BJ (cell line): ENCODE measurements at regions of chr3 and their contacts with region 1.

Region 1: DNA sequence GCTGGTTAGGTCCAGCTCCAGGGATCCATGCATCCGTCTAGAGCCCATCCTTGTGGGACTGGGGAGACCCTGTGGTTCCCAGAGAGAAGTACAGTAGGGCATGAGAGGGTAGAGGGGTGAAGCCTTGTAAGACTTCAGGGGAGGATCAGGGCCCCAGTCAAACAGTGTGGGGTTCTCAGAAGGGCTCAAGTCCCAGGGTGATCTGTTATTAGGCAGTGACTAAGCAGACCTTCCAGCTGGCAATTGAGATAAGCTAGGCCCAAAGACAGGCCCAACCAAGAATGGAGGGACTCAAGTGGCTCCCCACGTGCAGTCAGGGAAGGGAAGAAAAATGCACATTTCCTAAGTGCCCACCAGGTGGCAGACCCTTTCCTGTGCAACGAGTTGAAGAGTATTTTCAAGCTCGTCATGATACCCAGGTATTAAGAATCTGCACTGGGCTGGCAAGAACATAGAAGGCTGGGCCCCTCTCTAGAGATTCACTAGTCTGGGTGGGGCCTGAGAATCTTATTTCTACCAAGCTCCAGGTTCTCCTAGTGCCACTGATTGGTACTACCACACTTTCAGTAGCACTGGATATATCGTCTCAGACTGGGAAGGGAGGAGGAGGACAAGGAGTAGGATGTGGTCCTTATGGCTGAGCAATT is 240.8 kb downstream of the NR1D2 start:
- DNase-seq: no peak
- H3K4me3 ChIP-seq: no peak overlapping the region
- H3K27me3 ChIP-seq: no peaks in the 10 kb centered on the region
- CTCF ChIP-seq: peak; percentile 74

Region 2: GRCh38 chr3:24196526-24196925 is 10.7 kb after region 1 on chr3:
- CTCF ChIA-PET with region 1: interaction called, 14 read pairs
- POLR2A ChIA-PET with region 1: no interaction called
- DNase-seq: peak; percentile 77
- H3K4me3 ChIP-seq: no peak overlapping the region
- H3K27me3 ChIP-seq: no peaks in the 10 kb centered on the region
- CTCF ChIP-seq: no peak

Region 3: DNA sequence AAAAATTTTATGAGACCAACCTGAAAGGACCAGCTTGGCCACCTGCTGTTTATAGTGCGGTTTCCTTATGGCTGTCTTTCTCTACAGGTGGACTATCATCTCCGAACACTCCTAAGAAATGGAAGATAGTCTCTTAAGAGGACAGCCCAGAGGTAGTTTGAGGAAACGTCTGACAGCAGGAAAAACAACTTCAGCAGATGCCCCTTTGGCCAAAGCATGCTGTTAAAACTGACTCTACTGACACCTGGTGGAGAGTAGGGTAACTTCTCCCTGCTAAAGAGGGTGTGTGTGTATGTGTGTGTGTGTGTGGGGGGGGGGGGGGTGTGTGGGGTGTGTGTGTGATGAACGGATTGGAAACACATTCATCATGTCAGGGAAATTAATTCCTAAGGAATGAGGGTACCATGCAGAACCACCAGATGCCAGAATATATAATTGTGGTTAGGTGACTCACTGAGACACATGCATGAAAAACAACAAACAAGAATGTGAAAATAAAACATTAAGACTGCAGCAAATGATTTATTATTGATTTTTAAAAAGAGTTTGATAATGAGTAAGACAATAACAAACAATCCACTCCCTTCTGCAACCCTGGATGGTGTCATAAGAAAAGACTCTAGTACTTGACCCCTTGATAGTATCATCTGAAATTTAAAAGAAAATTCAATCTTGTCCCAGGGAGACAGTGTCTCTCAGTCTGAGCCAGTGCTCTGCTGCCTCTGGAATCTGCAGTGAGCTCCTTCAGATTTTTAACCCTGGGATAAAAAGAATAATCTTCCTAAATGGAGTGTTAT is 52.3 kb after region 1 on chr3:
- CTCF ChIA-PET with region 1: interaction called, 25 read pairs
- POLR2A ChIA-PET with region 1: interaction called, 6 read pairs
- DNase-seq: peak; percentile 95
- H3K4me3 ChIP-seq: no peak overlapping the region
- H3K27me3 ChIP-seq: no peaks in the 10 kb centered on the region; the same call in 1 of the 2 replicates
- CTCF ChIP-seq: peak; percentile 72

Region 4: GRCh38 chr3:24351779-24352469 is 166.1 kb after region 1 on chr3:
- CTCF ChIA-PET with region 1: no interaction called
- POLR2A ChIA-PET with region 1: no interaction called
- DNase-seq: peak; percentile 39
- H3K4me3 ChIP-seq: no peak overlapping the region
- H3K27me3 ChIP-seq: no peaks in the 10 kb centered on the region
- CTCF ChIP-seq: no peak